ENCODE measurements at regions of chr10 and their contacts with region 1.

Region 1: DNA sequence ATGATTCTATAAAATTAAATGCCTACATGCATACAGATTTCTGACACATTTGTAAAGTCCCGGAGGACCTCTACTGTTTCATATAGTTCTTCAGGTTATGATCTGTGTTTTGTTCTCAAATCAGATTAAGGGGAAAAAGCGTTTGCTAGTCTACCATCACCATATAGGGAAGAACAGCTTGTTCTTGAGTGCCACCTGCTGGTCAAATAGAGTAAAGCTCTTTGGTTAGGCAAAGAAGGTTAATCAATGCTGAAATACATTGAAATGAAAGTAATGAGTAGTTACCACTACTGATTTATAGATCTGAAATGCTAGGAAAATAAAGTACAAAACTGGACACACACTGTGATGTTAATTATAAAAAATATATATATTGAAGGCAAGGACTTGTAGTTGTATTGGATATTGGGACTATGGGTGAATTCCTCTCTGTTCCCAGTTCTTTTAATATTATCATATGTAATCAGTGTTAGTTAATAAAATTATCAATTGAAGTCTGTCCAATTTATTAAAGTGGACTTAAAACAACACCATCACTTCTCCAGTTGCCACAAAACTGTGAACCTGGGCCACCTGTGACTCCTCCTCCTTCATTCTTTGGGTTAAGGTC is 72.6 kb upstream of the PDLIM1 start:
- DNase-seq: no peak
- H3K4me3 ChIP-seq: no peak overlapping the region
- H3K27ac ChIP-seq: no peak overlapping the region
- H3K4me1 ChIP-seq: peaks cover 0 to 29% (median 7%) of the 10 kb centered on the region in 6 donors
- H3K27me3 ChIP-seq: no peaks in the 10 kb centered on the region
- CTCF ChIP-seq: peak; percentile 73 to 92 (median 89)
- POLR2A ChIP-seq: no peak

Region 2: GRCh38 chr10:95183271-95184230 is 179.9 kb before region 1 on chr10:
- intact Hi-C with region 1: loop called (anchors 10 kb)
- DNase-seq: peak; percentile 96
- H3K4me3 ChIP-seq: peak overlapping the region; percentile 47 to 73 (median 54)
- H3K27ac ChIP-seq: peak overlapping the region; percentile 43 to 89 (median 80)
- H3K4me1 ChIP-seq: peaks cover 0 to 21% (median 10%) of the 10 kb centered on the region in 6 donors
- H3K27me3 ChIP-seq: peaks cover 0 to 16% (median 0%) of the 10 kb centered on the region in 7 donors
- CTCF ChIP-seq: peak; percentile 61 to 97 (median 87)
- POLR2A ChIP-seq: no peak

Measured in spleen (tissue), 13 donors.